ENCODE measurements at regions of chr7 and their contacts with region 1.

Region 1: DNA sequence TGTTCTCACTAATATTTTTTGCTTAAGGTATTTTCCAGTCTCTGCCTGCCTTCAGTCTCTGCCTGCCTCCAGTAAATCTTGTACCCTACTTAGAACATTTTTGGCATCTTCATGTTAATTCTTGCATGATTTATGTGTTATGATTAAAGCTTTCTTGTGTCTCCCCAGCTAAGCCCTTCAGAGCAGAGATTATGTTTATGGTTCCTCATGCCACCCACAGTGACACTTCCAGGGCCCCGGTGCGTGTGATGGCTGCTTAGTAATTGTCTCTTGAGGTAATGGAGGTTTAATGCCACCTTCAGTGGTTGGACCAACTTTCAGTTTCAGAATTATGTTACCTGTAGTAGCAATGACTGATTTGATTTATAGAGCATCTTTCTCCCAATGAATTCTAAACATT is 70.6 kb upstream of the MET start:
- DNase-seq: no peak
- H3K4me3 ChIP-seq: no peak overlapping the region
- H3K4me3 Mint-ChIP-seq: no peak overlapping the region
- H3K27ac Mint-ChIP-seq: no peak overlapping the region
- H3K4me1 ChIP-seq: peaks cover 29% of the 10 kb centered on the region
- H3K4me1 Mint-ChIP-seq: peaks cover 17% of the 10 kb centered on the region
- H3K27me3 ChIP-seq: no peaks in the 10 kb centered on the region
- H3K27me3 Mint-ChIP-seq: no peaks in the 10 kb centered on the region
- CTCF ChIP-seq: no peak

Region 2: DNA sequence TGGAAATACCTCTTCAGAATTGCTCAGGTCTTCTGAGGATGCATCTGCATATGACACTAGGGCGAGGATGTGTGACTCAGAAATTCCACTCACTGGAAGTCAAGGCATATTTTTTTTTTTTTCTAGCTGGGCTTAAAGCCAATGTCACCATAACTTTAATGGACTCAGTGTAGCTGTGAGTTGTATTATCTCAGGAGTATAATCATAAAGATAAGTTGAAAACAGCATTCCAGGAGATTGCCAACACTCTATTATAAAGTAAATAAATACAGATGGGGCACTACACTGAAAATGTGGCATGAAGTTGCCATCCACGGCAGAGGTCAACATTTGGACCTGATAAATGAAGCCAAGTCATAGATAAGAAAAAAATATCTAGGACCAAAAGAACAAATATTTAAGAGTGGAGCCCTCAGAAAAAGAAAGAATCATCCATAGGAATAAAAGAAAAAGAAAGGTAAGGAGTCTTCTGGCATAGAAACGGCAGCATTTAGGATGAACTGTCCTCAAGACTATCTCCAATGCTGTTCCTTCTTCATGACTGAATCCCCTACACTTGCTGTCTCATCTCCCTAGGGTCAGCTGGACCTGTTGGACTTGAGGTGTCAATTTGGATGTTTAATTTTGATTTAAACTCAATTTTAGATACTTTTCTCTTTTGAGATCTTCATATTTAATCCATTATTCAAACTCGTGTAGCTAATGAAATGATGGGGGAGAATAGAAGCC is 174.8 kb before region 1 on chr7:
- CTCF ChIA-PET with region 1: no interaction called
- POLR2A ChIA-PET with region 1: no interaction called
- intact Hi-C with region 1: no loop called
- DNase-seq: no peak
- H3K4me3 ChIP-seq: no peak overlapping the region
- H3K4me3 Mint-ChIP-seq: no peak overlapping the region
- H3K27ac Mint-ChIP-seq: no peak overlapping the region
- H3K4me1 ChIP-seq: peaks cover 9% of the 10 kb centered on the region; the same call in 1 of the 2 replicates
- H3K4me1 Mint-ChIP-seq: peaks cover 6% of the 10 kb centered on the region
- H3K27me3 ChIP-seq: no peaks in the 10 kb centered on the region
- H3K27me3 Mint-ChIP-seq: no peaks in the 10 kb centered on the region
- CTCF ChIP-seq: no peak

Region 3: DNA sequence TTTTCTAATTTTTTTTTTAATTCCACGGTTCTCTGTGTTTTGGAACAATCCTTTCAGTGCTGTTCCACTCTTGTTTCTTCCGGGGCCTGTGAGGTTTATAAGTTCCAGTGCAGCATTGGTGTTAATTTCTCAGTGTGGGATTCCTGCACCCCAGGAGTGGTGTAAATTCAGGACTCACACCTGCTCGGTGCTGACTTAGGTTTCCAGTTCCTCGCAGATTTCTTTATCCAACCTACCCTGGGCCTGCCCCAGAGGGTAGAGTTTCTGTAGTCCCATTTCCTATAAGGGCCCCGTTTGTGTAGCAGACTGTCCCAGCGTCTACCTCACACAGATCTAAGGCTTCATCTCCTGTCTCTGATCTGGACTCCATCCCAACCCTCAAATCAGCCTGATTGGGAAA is 43.2 kb after region 1 on chr7:
- CTCF ChIA-PET with region 1: no interaction called
- POLR2A ChIA-PET with region 1: no interaction called
- intact Hi-C with region 1: loop called (anchors 5 kb)
- DNase-seq: no peak
- H3K4me3 ChIP-seq: no peak overlapping the region
- H3K4me3 Mint-ChIP-seq: no peak overlapping the region
- H3K27ac Mint-ChIP-seq: no peak overlapping the region
- H3K4me1 ChIP-seq: no peaks in the 10 kb centered on the region
- H3K4me1 Mint-ChIP-seq: no peaks in the 10 kb centered on the region
- H3K27me3 ChIP-seq: no peaks in the 10 kb centered on the region
- H3K27me3 Mint-ChIP-seq: no peaks in the 10 kb centered on the region
- CTCF ChIP-seq: no peak

Measured in Caco-2 (cell line).